Calu3 (cell line): ENCODE measurements at regions of chr15 and their contacts with region 1.

Region 1: GRCh38 chr15:101288908-101289513 is 6.0 kb downstream of the SNRPA1 start:
- DNase-seq: peak; percentile 36
- H3K4me3 Mint-ChIP-seq: no peak overlapping the region
- H3K27ac Mint-ChIP-seq: peak overlapping the region; percentile 75
- H3K4me1 Mint-ChIP-seq: peaks cover 12% of the 10 kb centered on the region
- H3K27me3 Mint-ChIP-seq: no peaks in the 10 kb centered on the region
- CTCF ChIP-seq: peak; percentile 75

Region 2: GRCh38 chr15:101232677-101233076 is 56.3 kb before region 1 on chr15:
- CTCF ChIA-PET with region 1: no interaction called
- intact Hi-C with region 1: loop called (anchors 2 kb)
- DNase-seq: no peak
- H3K4me3 Mint-ChIP-seq: no peak overlapping the region
- H3K27ac Mint-ChIP-seq: no peak overlapping the region
- H3K4me1 Mint-ChIP-seq: no peaks in the 10 kb centered on the region
- H3K27me3 Mint-ChIP-seq: no peaks in the 10 kb centered on the region
- CTCF ChIP-seq: no peak

Region 3: GRCh38 chr15:101269479-101270223 is 19.4 kb before region 1 on chr15:
- CTCF ChIA-PET with region 1: no interaction called
- intact Hi-C with region 1: no loop called
- DNase-seq: peak; percentile 32
- H3K4me3 Mint-ChIP-seq: no peak overlapping the region
- H3K27ac Mint-ChIP-seq: no peak overlapping the region
- H3K4me1 Mint-ChIP-seq: peaks cover 15% of the 10 kb centered on the region
- H3K27me3 Mint-ChIP-seq: no peaks in the 10 kb centered on the region
- CTCF ChIP-seq: peak; percentile 30

Region 4: DNA sequence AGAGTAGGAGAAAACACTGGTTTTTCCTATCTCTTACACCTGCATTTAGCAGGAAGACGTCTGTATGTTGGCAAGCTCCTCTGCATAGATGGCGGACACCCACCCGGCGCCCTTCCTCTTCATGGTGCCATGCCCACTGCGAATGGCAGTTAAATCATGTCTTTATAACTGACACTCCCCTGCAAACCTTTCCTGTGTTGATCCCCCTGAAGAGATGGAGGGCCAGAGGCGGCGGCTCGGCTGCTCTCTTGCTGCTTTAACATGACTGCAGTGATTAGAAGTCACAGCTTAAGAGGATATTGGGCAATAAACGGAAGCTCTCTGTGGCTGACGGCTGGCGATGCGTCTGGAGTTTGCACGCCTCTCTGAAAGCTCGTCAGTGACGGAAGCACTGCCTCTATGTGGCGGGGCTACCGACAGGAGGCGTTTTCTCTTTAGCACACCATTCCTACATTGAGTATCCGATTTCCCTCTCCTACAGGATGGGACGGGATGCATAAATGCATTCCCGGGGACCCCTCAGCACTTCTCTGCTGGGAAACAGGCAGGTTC is 31.6 kb after region 1 on chr15:
- CTCF ChIA-PET with region 1: no interaction called
- intact Hi-C with region 1: no loop called
- DNase-seq: no peak
- H3K4me3 Mint-ChIP-seq: no peak overlapping the region
- H3K27ac Mint-ChIP-seq: no peak overlapping the region
- H3K4me1 Mint-ChIP-seq: peaks cover 16% of the 10 kb centered on the region
- H3K27me3 Mint-ChIP-seq: peaks cover 44% of the 10 kb centered on the region
- CTCF ChIP-seq: no peak